Transverse colon (tissue), 4 donors: ENCODE measurements at regions of chr19 and their contacts with region 1.

Region 1: DNA sequence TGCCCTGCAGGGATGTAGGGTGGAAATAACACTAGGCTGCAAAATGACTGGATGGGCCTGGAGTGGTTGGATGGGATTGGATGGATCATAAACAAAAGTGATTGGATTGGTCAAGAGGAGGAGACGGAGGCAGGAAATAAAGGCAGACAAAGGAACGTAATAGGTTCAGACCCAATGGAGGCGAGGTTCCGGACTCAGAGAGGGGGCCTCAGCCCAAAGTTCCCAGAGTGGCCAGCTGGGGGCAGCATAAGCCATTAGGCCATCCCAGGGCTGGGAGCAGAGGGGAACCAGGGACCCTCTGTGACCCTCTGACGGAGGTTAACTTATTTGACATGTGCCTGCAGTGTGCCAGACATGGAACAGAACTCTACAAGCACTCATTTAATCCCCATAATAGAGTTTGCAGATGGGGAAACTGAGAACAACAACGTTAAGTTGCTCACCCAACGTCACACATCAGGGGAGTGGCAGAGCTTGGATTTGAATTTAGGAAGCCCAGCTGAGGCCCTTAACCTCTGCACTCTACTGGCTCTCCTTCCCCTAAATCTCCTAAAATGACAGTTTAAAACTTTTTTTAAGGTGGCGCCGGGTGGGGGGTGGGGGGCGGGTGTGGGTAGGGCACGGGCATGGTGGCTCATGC is 15.3 kb upstream of the MAP1S start:
- DNase-seq: peak; percentile 67
- H3K4me3 ChIP-seq: no peak overlapping the region
- H3K27ac ChIP-seq: no peak overlapping the region
- H3K4me1 ChIP-seq: no peaks in the 10 kb centered on the region
- H3K27me3 ChIP-seq: peaks cover 4% of the 10 kb centered on the region
- CTCF ChIP-seq: peak; percentile 80 to 89 (median 84)
- EP300 ChIP-seq: no peak
- POLR2A ChIP-seq: no peak

Region 2: DNA sequence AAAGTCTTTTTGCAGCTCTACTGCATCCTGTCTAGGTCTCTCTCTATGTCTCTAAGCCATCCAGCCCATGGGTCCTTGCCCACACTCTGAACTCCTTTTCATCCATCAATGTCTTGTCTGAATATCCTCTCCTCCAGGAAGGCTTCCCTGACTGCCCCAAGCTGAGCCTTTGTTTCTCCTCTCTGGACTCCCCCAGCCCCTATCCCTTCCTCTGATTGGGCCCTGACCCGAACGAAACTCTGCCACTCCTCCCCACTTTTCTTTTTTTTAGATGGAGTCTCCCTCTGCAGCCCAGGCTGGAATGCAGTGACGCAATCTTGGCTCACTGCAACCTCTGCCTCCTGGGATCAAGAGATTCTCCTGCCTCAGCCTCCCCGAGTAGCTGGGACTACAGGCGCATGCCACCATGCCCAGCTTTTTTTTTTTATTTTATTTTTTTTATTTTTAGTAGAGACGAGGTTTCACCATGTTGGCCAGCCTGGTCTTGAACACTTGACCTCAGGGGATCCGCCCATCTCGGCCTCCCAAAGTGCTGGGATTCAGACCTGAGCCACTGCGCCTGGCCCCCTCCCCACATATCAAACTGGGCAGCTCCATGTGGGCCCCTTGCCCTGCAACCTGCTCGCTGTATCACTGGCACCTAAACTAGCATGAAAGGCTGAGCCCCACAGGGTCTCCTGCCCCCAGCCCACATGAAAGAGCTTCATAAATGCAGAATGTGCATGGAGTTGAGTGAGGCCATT is 14.9 kb before region 1 on chr19:
- in situ Hi-C with region 1: no loop called
- intact Hi-C with region 1: no loop called
- DNase-seq: no peak
- H3K4me3 ChIP-seq: no peak overlapping the region
- H3K27ac ChIP-seq: no peak overlapping the region
- H3K4me1 ChIP-seq: peaks cover 10 to 20% (median 13%) of the 10 kb centered on the region in 4 donors
- H3K27me3 ChIP-seq: peaks cover 78% of the 10 kb centered on the region
- CTCF ChIP-seq: no peak
- EP300 ChIP-seq: no peak
- POLR2A ChIP-seq: no peak

Region 3: GRCh38 chr19:17775245-17775916 is 71.4 kb after region 1 on chr19:
- in situ Hi-C with region 1: loop called in 1 of 4 experiments (anchors 10 kb)
- intact Hi-C with region 1: no loop called
- DNase-seq: peak; percentile 49
- H3K4me3 ChIP-seq: no peak overlapping the region
- H3K27ac ChIP-seq: no peak overlapping the region
- H3K4me1 ChIP-seq: peaks cover 0 to 12% (median 12%) of the 10 kb centered on the region in 4 donors
- H3K27me3 ChIP-seq: peaks cover 9% of the 10 kb centered on the region
- CTCF ChIP-seq: peak; percentile 27 to 42 (median 39)
- EP300 ChIP-seq: no peak
- POLR2A ChIP-seq: no peak